Naive thymus-derived CD8-positive, alpha-beta T cell (primary cell): ENCODE measurements at regions of chrX and their contacts with region 1.

Region 1: GRCh38 chrX:149504915-149505651 is at the start of gene IDS:
- DNase-seq: peak; percentile 69 to 95 (median 84)
- ATAC-seq: peak; percentile 61 to 70
- H3K4me3 Mint-ChIP-seq: peak within 1 kb of the TSS; percentile 85 to 99 (median 93)
- H3K27ac Mint-ChIP-seq: peak within 1 kb of the TSS; percentile 95 to 100 (median 97)
- H3K4me1 Mint-ChIP-seq: peaks cover 9 to 41% (median 34%) of the 10 kb centered on the region in 4 donors
- H3K27me3 Mint-ChIP-seq: no peaks in the 10 kb centered on the region
- polyA plus RNA-seq, gene IDS: 65.4 to 98.4 (median 81.1) TPM

Region 2: GRCh38 chrX:149433051-149433450 is 72.0 kb before region 1 on chrX:
- POLR2A ChIA-PET with region 1: no interaction called
- DNase-seq: no peak
- ATAC-seq: no peak
- H3K4me3 Mint-ChIP-seq: no peak overlapping the region
- H3K27ac Mint-ChIP-seq: no peak overlapping the region
- H3K4me1 Mint-ChIP-seq: no peaks in the 10 kb centered on the region
- H3K27me3 Mint-ChIP-seq: peaks cover 0 to 13% (median 2%) of the 10 kb centered on the region in 5 donors

Region 3: DNA sequence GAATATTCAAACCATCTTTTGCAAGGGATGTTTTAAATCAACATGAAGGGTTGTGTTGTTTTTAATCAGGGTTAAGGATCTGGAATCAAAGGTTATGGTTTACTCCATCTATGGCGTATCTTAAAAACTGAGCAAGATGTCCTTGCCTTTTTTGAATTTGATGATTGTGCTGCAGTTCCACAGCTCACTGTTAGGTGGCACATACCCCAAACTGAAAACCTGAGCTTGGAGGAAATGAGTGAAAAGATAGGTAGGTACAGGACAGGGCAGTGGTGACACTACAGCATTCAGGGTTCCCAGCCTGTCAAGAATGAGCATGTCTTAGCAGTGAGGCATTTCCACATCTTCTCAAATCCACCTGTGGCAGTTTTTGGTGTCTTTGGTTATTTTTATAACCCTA is 22.6 kb after region 1 on chrX:
- POLR2A ChIA-PET with region 1: interaction called, 14 read pairs
- DNase-seq: peak in 6 of 10 donors; percentile 33 to 65 (median 51)
- ATAC-seq: peak in 1 of 2 donors; percentile 16
- H3K4me3 Mint-ChIP-seq: peak overlapping the region in 4 of 10 donors; percentile 15 to 62 (median 30)
- H3K27ac Mint-ChIP-seq: peak overlapping the region; percentile 43 to 91 (median 70)
- H3K4me1 Mint-ChIP-seq: peaks cover under 1 to 30% (median 12%) of the 10 kb centered on the region in 4 donors
- H3K27me3 Mint-ChIP-seq: no peaks in the 10 kb centered on the region